Heart left ventricle (tissue), 16 donors: ENCODE measurements at regions of chr10 and their contacts with region 1.

Region 1: GRCh38 chr10:19819419-19820033 is 3.3 kb downstream of the PLXDC2 start:
- DNase-seq: peak in 2 of 5 donors; percentile 50 to 53
- ATAC-seq: no peak
- H3K4me3 ChIP-seq: peak overlapping the region in 9 of 12 donors; percentile 67 to 95 (median 84)
- H3K27ac ChIP-seq: peak overlapping the region in 9 of 12 donors; percentile 7 to 87 (median 36)
- H3K4me1 ChIP-seq: peaks cover 0 to 30% (median 13%) of the 10 kb centered on the region in 12 donors
- H3K27me3 ChIP-seq: peaks cover 0 to 18% (median 0%) of the 10 kb centered on the region in 9 donors
- CTCF ChIP-seq: peak; percentile 72 to 93 (median 86)
- POLR2A ChIP-seq: no peak

Region 2: GRCh38 chr10:19922236-19922963 is 102.9 kb after region 1 on chr10:
- intact Hi-C with region 1: loop called in 2 of 10 experiments (anchors 10 kb)
- DNase-seq: peak in 1 of 5 donors; percentile 44
- ATAC-seq: peak; percentile 35 to 76 (median 76)
- H3K4me3 ChIP-seq: no peak overlapping the region
- H3K27ac ChIP-seq: peak overlapping the region; percentile 11 to 82 (median 64)
- H3K4me1 ChIP-seq: peaks cover 0 to 57% (median 39%) of the 10 kb centered on the region in 12 donors
- H3K27me3 ChIP-seq: no peaks in the 10 kb centered on the region
- CTCF ChIP-seq: no peak
- POLR2A ChIP-seq: no peak

Region 3: GRCh38 chr10:19958787-19959186 is 139.3 kb after region 1 on chr10:
- intact Hi-C with region 1: loop called in 2 of 10 experiments (anchors 10 kb)
- DNase-seq: no peak
- ATAC-seq: no peak
- H3K4me3 ChIP-seq: no peak overlapping the region
- H3K27ac ChIP-seq: peak overlapping the region in 1 of 12 donors; percentile 36
- H3K4me1 ChIP-seq: peaks cover 0 to 36% (median 8%) of the 10 kb centered on the region in 12 donors
- H3K27me3 ChIP-seq: no peaks in the 10 kb centered on the region
- CTCF ChIP-seq: no peak
- POLR2A ChIP-seq: no peak

Region 4: DNA sequence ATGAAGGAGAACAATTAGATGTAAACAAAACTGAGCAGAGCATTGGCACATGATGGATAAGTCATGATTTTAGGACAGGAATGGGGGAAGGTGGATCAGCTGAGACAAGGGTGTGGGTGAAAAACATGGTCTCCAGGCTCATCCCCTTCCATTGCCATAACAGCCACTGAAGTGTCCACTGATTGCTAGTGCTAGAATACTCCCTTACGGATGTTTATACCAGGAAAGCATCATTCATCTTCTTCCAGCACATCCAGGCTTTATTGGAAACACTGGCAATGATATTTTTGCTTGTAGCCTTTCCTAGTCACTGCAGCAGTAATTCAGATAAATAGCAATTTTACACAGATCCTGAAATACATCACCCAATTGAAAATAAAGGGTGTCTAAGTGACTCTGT is 256.2 kb after region 1 on chr10:
- intact Hi-C with region 1: loop called in 1 of 10 experiments (anchors 10 kb)
- DNase-seq: no peak
- ATAC-seq: no peak
- H3K4me3 ChIP-seq: no peak overlapping the region
- H3K27ac ChIP-seq: no peak overlapping the region
- H3K4me1 ChIP-seq: no peaks in the 10 kb centered on the region
- H3K27me3 ChIP-seq: no peaks in the 10 kb centered on the region
- CTCF ChIP-seq: no peak
- POLR2A ChIP-seq: no peak

Region 5: DNA sequence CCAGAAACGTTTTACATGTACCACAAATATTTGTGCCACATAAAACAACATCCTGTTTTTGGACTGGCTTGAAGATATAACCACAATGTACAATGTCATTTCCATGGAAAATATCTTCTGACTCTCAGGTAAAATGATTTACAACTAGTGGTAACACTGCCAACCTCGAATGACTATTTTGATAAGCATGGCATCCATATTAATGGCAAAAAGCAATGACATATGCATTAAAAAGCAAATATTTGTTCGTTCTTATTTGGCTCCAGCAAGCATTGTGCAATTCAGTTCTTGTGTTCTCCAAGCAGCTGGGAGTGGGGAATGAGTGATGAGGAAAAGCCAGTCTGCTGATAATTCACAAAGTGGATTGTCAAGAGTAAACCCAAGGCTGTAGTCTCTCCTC is 285.7 kb after region 1 on chr10:
- intact Hi-C with region 1: no loop called
- DNase-seq: no peak
- ATAC-seq: no peak
- H3K4me3 ChIP-seq: no peak overlapping the region
- H3K27ac ChIP-seq: no peak overlapping the region
- H3K4me1 ChIP-seq: peaks cover 0 to 15% (median 2%) of the 10 kb centered on the region in 12 donors
- H3K27me3 ChIP-seq: no peaks in the 10 kb centered on the region
- CTCF ChIP-seq: no peak
- POLR2A ChIP-seq: no peak

Region 6: GRCh38 chr10:20247891-20248708 is 428.6 kb after region 1 on chr10:
- intact Hi-C with region 1: loop called in 1 of 10 experiments (anchors 10 kb)
- DNase-seq: no peak
- ATAC-seq: peak in 1 of 4 donors; percentile 73
- H3K4me3 ChIP-seq: no peak overlapping the region
- H3K27ac ChIP-seq: no peak overlapping the region
- H3K4me1 ChIP-seq: peaks cover 0 to 11% (median 0%) of the 10 kb centered on the region in 12 donors
- H3K27me3 ChIP-seq: no peaks in the 10 kb centered on the region
- CTCF ChIP-seq: no peak
- POLR2A ChIP-seq: no peak

Region 7: GRCh38 chr10:20622531-20623232 is 803.2 kb after region 1 on chr10:
- intact Hi-C with region 1: loop called in 2 of 10 experiments (anchors 5 to 10 kb)
- DNase-seq: no peak
- ATAC-seq: peak in 2 of 4 donors; percentile 39 to 40
- H3K4me3 ChIP-seq: no peak overlapping the region
- H3K27ac ChIP-seq: peak overlapping the region in 10 of 12 donors; percentile 9 to 69 (median 43)
- H3K4me1 ChIP-seq: peaks cover 0 to 19% (median 6%) of the 10 kb centered on the region in 12 donors
- H3K27me3 ChIP-seq: no peaks in the 10 kb centered on the region
- CTCF ChIP-seq: no peak
- POLR2A ChIP-seq: no peak

Region 8: GRCh38 chr10:20768843-20769242 is 949.3 kb after region 1 on chr10:
- intact Hi-C with region 1: loop called (anchors 1 to 10 kb)
- DNase-seq: no peak
- ATAC-seq: peak in 1 of 4 donors; percentile 40
- H3K4me3 ChIP-seq: no peak overlapping the region
- H3K27ac ChIP-seq: no peak overlapping the region
- H3K4me1 ChIP-seq: peaks cover 0 to 11% (median 0%) of the 10 kb centered on the region in 12 donors
- H3K27me3 ChIP-seq: no peaks in the 10 kb centered on the region
- CTCF ChIP-seq: peak; percentile 31 to 74 (median 58)
- POLR2A ChIP-seq: no peak